MCF 10A (cell line): ENCODE measurements at regions of chrX and their contacts with region 1.

Region 1: DNA sequence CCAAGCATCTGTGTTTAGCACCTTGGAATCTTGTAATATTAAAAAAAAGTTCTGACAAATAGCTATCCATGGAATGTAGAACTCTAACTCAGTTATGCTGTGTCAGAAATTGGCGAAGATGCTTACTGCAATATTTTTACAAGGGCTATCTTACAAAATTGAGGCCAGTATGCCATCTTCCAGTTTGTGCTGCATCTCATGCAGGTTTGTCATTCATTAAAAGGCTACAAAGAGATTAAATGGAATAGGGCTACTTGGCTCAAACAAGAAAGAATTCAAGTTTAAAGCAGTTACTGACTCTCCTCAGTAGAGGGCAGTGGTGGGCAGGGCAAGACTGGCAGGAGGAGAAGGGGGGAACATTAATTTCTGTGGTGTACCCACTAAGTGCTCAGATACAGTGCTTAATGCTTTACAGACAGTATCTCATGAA is 66.5 kb downstream of the SHROOM4 start:
- DNase-seq: peak; percentile 47
- H3K4me3 Mint-ChIP-seq: no peak overlapping the region
- H3K27ac Mint-ChIP-seq: no peak overlapping the region
- H3K4me1 Mint-ChIP-seq: no peaks in the 10 kb centered on the region
- H3K27me3 Mint-ChIP-seq: peaks cover 86% of the 10 kb centered on the region
- CTCF ChIP-seq: peak; percentile 85

Region 2: DNA sequence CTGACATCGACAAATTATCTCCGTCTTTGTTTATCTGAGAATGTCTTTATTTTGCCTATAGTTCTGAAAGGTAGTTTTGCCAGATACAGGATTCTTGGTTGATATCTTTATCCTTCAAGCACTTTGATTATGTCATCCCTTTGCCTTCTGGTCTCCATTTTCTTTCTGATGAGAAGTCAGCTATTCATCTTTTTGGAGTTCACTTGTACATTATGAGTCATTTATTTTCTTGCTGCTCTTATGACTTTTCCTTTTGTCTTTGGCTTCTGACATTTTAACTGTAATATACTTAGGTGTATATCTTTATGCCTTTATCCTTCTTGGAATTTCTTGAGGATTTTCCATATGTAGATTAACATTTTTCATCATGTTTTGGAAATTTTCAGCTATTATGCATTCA is 15.1 kb after region 1 on chrX:
- CTCF ChIA-PET with region 1: interaction called, 16 read pairs
- POLR2A ChIA-PET with region 1: no interaction called
- intact Hi-C with region 1: no loop called
- DNase-seq: no peak
- H3K4me3 Mint-ChIP-seq: no peak overlapping the region
- H3K27ac Mint-ChIP-seq: no peak overlapping the region
- H3K4me1 Mint-ChIP-seq: no peaks in the 10 kb centered on the region
- H3K27me3 Mint-ChIP-seq: peaks cover 72% of the 10 kb centered on the region
- CTCF ChIP-seq: no peak

Region 3: DNA sequence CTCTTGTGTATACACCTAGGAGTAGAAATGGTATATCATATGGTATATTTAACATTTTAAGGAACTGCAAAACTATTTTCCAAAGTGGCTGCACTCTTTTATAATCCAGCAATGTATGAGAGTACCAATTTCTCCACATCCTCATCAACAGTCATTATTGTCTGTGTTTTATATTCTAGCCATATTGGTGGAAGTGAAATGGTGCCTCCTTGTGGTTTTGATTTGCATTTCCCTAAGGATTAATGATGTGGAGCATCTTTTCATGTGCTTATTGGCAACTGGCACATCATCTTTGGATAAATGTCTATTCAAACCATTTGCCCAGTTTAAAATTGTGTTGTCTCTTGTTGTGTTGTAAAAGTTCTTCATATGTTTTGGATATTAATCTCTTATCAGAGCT is 172.6 kb after region 1 on chrX:
- CTCF ChIA-PET with region 1: interaction called, 111 read pairs
- POLR2A ChIA-PET with region 1: no interaction called
- intact Hi-C with region 1: loop called (anchors 1 kb)
- DNase-seq: peak; percentile 42
- H3K4me3 Mint-ChIP-seq: no peak overlapping the region
- H3K27ac Mint-ChIP-seq: no peak overlapping the region
- H3K4me1 Mint-ChIP-seq: no peaks in the 10 kb centered on the region
- H3K27me3 Mint-ChIP-seq: peaks cover 64% of the 10 kb centered on the region
- CTCF ChIP-seq: peak; percentile 53